ENCODE measurements at regions of chr10 and their contacts with region 1.

Region 1: DNA sequence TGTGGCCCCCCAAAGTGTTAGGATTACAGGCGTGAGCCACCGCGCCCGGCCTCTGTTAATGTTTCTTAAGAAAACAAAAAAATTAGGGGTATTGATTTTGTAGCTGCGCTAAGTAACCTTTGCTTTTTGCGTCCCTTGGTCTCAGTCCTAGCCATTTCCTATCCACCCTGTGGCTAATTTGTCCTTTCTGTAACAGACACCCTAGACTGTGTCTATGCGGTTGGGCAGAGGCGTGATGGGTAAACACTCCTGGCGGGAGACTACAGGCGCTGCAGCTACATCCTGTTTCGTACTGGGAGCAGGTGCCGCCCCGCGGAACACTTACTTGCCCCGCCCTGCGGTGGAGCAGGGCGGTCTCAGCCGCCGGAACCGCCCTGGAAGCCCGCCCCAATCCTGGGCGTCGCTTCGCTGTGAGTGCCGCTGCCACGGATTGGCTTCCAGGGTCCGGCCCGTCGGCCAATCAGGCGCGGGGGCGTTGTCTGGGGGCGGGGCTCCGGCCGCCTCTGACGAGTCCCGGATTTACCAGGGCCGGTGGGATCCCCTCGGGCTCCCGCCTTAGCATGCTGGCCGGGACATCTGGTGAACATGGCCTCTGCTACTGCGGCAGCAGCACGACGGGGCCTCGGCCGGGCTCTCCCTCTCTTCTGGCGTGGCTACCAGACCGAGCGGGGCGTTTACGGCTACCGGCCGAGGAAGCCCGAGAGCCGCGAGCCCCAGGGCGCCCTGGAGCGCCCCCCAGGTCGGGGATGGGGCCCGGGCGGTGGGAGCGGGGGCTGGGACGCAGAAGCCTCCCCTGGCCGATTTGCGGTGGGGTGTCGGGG is at the start of gene DHTKD1:
- DNase-seq: peak; percentile 100
- H3K4me3 ChIP-seq: peak within 1 kb of the TSS; percentile 84 to 100 (median 98)
- H3K27ac ChIP-seq: peak within 1 kb of the TSS; percentile 83 to 92 (median 86)
- H3K4me1 ChIP-seq: peaks cover 8 to 21% (median 16%) of the 10 kb centered on the region in 4 donors
- H3K27me3 ChIP-seq: no peaks in the 10 kb centered on the region
- CTCF ChIP-seq: peak; percentile 15 to 62 (median 30)
- EP300 ChIP-seq: no peak
- POLR2A ChIP-seq: no peak
- total RNA-seq, gene DHTKD1: 19.2 to 44.4 (median 24.2) TPM

Region 2: DNA sequence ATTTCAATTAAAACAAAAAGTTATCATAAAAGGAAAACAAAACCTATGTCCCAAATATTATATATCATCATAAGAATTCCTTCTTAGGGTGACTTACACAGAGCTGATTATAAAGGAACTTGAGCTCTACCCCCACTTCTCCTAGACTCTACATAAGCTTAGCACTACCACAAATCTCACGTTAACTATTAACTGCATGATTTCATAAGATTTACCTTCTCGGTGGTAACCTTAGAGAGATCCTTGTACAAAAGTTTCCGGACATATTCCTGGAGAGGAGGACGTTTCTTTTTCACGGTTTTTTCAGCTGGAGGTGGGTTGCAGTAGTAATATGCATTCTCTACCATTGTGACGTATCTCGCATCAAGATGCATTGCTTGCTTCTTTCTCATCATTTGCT is 109.7 kb before region 1 on chr10:
- intact Hi-C with region 1: no loop called
- DNase-seq: no peak
- H3K4me3 ChIP-seq: no peak overlapping the region
- H3K27ac ChIP-seq: no peak overlapping the region
- H3K4me1 ChIP-seq: no peaks in the 10 kb centered on the region
- H3K27me3 ChIP-seq: no peaks in the 10 kb centered on the region
- CTCF ChIP-seq: no peak
- EP300 ChIP-seq: no peak
- POLR2A ChIP-seq: no peak

Region 3: GRCh38 chr10:12042797-12043651 is 25.6 kb before region 1 on chr10 and contains the start of gene UPF2:
- intact Hi-C with region 1: loop called (anchors 2 kb)
- DNase-seq: peak; percentile 99
- H3K4me3 ChIP-seq: peak within 1 kb of the TSS; percentile 86 to 100 (median 96)
- H3K27ac ChIP-seq: peak within 1 kb of the TSS; percentile 87 to 98 (median 96)
- H3K4me1 ChIP-seq: peaks cover 14 to 38% (median 25%) of the 10 kb centered on the region in 4 donors
- H3K27me3 ChIP-seq: peaks cover 0 to 2% (median 0%) of the 10 kb centered on the region in 4 donors
- CTCF ChIP-seq: peak in 1 of 3 experiments; percentile 6
- EP300 ChIP-seq: no peak
- POLR2A ChIP-seq: no peak
- total RNA-seq, gene UPF2: 26.0 to 38.6 (median 28.0) TPM

Region 4: DNA sequence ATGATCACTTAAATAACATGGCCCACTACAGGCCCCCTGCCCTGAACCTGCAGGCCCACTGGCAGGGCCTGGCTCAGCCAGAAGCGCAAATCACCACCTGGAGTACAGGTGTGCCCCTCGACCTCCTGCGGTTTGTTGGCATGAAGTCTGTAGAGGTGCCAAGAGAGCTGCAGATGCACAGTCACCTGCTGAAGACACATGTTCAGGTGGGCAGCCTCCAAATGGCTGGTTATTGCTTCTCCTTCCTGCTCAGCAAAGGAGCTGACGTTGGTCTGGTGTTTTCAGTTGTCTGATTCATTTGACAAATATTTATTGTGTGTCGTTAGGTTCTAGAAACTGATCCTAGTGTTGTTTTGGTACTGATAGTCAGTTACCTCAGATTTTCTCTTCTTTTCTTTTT is 29.1 kb after region 1 on chr10:
- intact Hi-C with region 1: no loop called
- DNase-seq: no peak
- H3K4me3 ChIP-seq: no peak overlapping the region
- H3K27ac ChIP-seq: no peak overlapping the region
- H3K4me1 ChIP-seq: no peaks in the 10 kb centered on the region
- H3K27me3 ChIP-seq: no peaks in the 10 kb centered on the region
- CTCF ChIP-seq: no peak
- EP300 ChIP-seq: no peak
- POLR2A ChIP-seq: no peak

Region 5: DNA sequence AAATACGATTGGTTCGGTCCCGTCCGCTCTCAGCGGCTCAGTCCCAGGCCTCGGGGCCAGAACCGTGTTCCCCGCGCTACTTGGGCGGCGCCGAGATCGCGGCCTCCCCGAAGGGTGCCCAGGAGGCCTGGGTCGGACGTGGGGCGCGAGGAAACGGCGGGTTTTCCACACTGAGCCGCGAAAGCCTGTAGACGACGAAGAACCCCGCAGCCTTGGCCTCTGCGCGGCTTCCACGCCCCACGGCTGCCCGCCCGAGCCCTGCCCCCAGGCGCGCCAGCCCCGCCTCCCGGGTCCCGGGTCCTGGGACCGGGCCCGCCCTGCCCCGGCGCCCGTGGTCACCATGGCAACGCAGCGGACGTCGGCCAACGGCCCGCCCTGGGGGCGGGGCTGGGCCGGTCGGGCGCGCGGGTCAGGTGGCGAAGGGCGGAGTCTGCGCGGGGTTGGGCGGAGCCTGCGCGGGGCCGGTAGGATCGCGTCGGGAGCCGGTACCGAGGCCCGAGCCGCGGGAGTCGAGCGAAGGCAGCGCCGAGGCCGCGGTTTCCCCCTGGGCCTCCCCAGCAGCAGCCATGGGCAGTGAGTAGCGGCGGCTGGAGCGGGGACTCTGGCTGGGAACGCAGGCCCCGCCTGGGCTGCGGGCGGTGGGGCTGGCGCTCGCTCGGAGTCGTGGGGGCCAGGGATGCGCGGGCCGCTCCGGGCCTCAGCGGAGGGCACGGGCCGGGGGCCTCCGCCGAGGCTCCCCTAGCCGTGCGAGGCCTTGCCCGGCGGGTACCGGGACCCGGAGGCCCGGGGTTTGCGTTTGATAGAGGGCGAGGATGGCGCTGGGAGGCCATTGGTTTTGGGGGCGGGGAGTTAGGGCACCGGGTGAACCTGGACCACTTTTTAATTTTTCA is 60.8 kb after region 1 on chr10 and contains the start of gene SEC61A2:
- intact Hi-C with region 1: loop called (anchors 5 kb)
- DNase-seq: peak; percentile 95
- H3K4me3 ChIP-seq: peak within 1 kb of the TSS; percentile 81 to 99 (median 89)
- H3K27ac ChIP-seq: peak within 1 kb of the TSS; percentile 87 to 93 (median 91)
- H3K4me1 ChIP-seq: peaks cover 0 to 20% (median 16%) of the 10 kb centered on the region in 4 donors
- H3K27me3 ChIP-seq: no peaks in the 10 kb centered on the region
- CTCF ChIP-seq: peak in 1 of 3 experiments; percentile 5
- EP300 ChIP-seq: no peak
- POLR2A ChIP-seq: peak; percentile 20
- total RNA-seq, gene SEC61A2: 4.1 to 8.5 (median 7.4) TPM

Region 6: GRCh38 chr10:12252882-12253546 is 184.4 kb after region 1 on chr10:
- intact Hi-C with region 1: no loop called
- DNase-seq: no peak
- H3K4me3 ChIP-seq: no peak overlapping the region
- H3K27ac ChIP-seq: no peak overlapping the region
- H3K4me1 ChIP-seq: peaks cover 0 to 14% (median 13%) of the 10 kb centered on the region in 4 donors
- H3K27me3 ChIP-seq: no peaks in the 10 kb centered on the region
- CTCF ChIP-seq: peak in 1 of 3 experiments; percentile 10
- EP300 ChIP-seq: no peak
- POLR2A ChIP-seq: no peak